PC-3 (cell line): ENCODE measurements at regions of chrX and their contacts with region 1.

Region 1: DNA sequence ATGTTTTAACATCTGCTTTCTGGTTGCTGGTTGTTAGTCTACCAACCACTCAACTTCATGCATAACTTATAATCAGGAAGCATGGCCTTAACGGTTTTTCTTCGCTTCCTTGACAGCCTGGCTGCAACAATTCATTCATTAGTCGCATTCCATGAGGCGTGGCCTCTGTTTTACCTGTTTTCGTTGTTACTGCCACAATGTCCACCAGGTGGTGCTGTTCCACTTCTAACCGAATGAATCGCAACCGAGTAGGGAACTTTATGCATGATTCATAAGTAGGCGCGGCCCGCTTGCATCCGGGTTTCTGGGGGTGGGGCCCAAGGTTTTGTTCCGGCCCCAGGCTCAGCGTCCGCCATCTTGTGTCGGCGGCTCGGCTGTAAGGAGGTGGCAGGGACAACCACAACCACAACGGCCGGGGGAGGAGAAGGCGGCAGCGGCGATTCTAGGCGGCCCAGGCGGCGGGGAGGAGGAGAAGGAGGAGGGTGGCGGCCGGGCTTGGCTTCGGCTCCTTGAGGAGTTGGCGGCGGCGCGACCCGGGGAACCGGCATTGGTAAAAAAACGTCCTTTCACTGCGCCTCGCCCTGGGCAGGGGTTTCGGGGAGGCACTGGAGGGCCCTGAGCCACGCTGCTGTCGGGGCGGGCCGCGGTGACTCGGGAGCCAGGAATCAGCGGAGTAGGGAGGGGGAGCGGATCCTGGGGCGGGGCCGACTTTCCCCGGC is at the start of gene UBA1:
- DNase-seq: peak; percentile 98
- ATAC-seq: peak; percentile 48
- H3K4me3 ChIP-seq: peak within 1 kb of the TSS; percentile 85
- H3K27ac ChIP-seq: peak within 1 kb of the TSS; percentile 90
- H3K4me1 ChIP-seq: peaks cover 40% of the 10 kb centered on the region
- H3K27me3 ChIP-seq: no peaks in the 10 kb centered on the region
- CTCF ChIP-seq: peak; percentile 80
- total RNA-seq, gene UBA1: 282 and 299 TPM in 2 replicates

Region 2: DNA sequence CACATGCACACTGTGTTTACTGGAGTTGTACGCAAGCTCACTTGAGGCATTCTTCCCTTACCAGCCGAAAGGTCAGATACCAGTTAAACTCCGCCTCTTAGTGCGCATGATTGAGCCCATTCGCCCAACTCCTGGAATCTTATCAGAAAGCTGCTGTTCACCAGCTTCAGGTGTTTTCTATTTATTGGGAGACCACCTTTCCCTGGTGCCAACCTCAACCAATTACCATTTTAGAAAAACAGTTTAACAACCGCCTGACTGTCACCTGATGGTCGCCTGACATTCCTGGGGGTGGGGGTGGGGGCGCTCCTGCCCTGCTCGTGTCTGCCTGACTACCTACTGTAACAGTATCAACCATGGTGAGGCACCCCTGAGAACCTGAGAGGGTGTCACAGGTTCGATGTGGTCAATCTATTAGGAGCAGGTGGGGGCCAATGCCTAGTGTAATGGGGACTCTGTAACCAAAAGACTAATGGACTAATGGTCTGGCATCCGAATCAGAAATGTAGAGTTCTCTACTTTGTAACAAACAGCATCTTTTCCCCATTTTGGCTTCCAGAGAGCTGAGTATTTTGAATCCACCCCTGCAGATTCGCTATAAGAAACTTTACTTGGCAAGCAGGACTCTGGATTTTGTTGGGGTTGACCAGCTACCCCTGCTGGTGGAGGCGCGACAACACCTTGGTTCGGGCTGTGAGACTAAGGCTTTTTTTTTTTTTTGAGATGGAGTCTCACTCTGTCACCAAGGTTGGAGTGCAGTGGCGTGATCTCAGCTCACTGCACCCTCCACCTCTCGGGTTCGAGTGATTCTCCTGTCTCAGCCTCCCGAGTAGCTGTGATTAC is 118.5 kb after region 1 on chrX:
- CTCF ChIA-PET with region 1: interaction called, 5 read pairs
- POLR2A ChIA-PET with region 1: no interaction called
- intact Hi-C with region 1: loop called (anchors 1 kb)
- DNase-seq: peak; percentile 74
- ATAC-seq: peak; percentile 65
- H3K4me3 ChIP-seq: peak overlapping the region; percentile 51; the same call in 1 of the 2 replicates
- H3K27ac ChIP-seq: peak overlapping the region; percentile 32; the same call in 1 of the 2 replicates
- H3K4me1 ChIP-seq: peaks cover 4% of the 10 kb centered on the region; the same call in 1 of the 2 replicates
- H3K27me3 ChIP-seq: no peaks in the 10 kb centered on the region
- CTCF ChIP-seq: peak; percentile 75

Region 3: DNA sequence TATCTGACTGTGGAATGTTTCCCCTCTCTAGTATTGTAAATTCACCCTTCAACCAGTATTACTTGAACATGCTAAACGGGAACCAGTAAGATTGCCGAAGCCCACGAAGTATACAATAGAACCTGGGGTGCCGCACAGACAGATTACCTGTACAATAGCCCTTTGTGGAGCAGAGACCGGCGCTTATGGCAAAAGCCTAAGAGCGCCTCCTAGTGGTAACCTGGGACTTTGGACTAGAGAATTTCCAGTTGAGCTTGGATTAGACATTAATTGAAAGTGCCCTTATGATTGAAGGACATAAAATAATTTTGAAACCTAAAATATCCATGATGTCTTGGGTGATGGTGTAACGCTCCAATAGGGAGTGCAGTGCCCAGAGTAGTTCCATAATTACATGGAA is 190.9 kb after region 1 on chrX:
- CTCF ChIA-PET with region 1: interaction called, 4 read pairs
- POLR2A ChIA-PET with region 1: no interaction called
- intact Hi-C with region 1: loop called (anchors 1 kb)
- DNase-seq: peak; percentile 85
- ATAC-seq: peak; percentile 77
- H3K4me3 ChIP-seq: no peak overlapping the region
- H3K27ac ChIP-seq: no peak overlapping the region
- H3K4me1 ChIP-seq: no peaks in the 10 kb centered on the region
- H3K27me3 ChIP-seq: no peaks in the 10 kb centered on the region
- CTCF ChIP-seq: peak; percentile 87

Region 4: DNA sequence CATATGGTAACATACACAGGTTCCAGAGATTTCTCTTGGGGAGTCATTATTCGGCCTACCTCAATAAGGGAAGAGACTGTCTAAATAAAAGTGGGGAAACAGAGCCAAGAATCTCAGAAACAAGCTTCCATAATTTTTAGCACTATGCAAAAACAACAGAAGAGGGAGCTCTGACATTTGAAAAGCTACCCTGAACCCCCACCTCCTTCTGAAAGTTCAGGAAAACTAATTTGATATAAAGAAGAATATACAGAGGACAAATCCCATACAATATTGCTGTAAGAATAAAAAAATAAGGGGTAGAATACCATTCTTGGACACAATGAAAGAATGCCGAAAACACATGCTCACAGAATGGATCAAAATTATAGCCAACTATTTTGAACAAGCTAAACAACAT is 303.6 kb after region 1 on chrX:
- CTCF ChIA-PET with region 1: no interaction called
- POLR2A ChIA-PET with region 1: no interaction called
- intact Hi-C with region 1: loop called (anchors 5 kb)
- DNase-seq: peak; percentile 62
- ATAC-seq: no peak
- H3K4me3 ChIP-seq: no peak overlapping the region
- H3K27ac ChIP-seq: peak overlapping the region; percentile 56; the same call in 1 of the 2 replicates
- H3K4me1 ChIP-seq: peaks cover 39% of the 10 kb centered on the region
- H3K27me3 ChIP-seq: no peaks in the 10 kb centered on the region
- CTCF ChIP-seq: peak; percentile 82

Region 5: DNA sequence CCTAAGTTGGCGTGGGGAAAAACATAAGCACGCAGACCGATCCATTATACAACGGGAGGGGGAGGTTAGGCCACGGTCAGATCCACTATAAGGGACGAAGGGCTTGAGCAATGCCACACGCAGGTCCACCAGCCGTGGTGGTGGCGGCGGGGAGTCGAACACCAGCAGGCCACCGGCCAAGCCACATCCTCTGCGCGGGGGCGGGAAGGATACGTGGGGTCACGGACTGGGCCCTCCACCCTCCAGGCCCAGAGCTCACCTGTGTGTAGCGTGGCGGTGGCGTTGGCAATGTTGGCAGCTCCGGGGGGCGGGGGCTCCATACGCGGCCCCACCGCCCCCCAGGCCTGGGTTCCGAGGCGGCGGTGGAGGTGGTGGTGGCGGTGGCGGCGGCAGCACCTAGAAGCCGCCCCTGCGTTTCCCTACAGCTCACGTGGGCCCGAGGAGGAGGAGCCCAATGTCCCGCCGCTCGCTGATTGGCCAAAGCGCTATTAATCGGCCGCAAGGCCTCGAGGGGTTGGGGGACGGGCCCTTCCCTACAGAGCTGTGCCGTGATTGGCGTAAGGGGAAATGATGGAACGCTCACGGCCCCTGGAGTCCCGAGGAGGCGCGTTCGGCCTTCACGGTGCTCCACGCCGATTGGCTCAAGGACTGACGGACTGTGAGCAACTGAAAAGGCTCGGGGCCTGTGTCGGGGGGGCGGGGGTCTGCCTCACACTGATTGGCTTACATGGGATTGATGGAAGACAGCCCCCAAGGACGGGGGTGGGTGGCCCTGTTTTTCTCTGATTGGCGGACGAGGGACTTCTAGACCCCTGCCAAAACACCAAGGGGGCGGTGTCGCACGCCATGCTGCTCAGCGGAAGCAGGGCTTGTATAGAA is 456.8 kb after region 1 on chrX and contains the start of gene ELK1:
- CTCF ChIA-PET with region 1: no interaction called
- POLR2A ChIA-PET with region 1: no interaction called
- intact Hi-C with region 1: loop called (anchors 10 kb)
- DNase-seq: peak; percentile 97
- ATAC-seq: peak; percentile 94
- H3K4me3 ChIP-seq: peak within 1 kb of the TSS; percentile 91
- H3K27ac ChIP-seq: peak within 1 kb of the TSS; percentile 50
- H3K4me1 ChIP-seq: peaks cover 13% of the 10 kb centered on the region
- H3K27me3 ChIP-seq: no peaks in the 10 kb centered on the region
- CTCF ChIP-seq: no peak
- total RNA-seq, gene ELK1: 59.0 and 63.1 TPM in 2 replicates